ENCODE measurements at regions of chr16 and their contacts with region 1.

Region 1: DNA sequence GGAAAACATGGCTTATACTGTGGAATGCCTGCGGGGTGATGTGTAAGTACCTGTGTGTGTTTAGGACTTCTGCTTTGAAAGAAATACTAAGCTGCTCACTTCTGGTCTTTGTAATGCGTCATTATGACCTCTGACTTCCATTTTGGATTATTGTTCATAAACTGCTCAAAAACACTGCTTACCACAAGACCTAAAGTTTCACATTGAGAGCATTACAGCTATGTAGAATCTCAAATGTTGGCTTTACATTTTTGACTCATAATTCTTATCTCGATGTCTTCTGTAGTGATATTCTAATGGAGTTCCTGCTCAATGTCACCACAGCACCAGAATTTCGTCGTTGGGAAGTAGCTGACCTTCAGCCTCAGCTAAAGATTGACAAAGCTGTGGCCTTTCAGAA is 9.3 kb downstream of the UQCRC2 start:
- DNase-seq: no peak
- ATAC-seq: no peak
- H3K4me3 ChIP-seq: no peak overlapping the region
- H3K4me3 Mint-ChIP-seq: no peak overlapping the region
- H3K27ac ChIP-seq: no peak overlapping the region
- H3K27ac Mint-ChIP-seq: no peak overlapping the region
- H3K4me1 ChIP-seq: peaks cover 4% of the 10 kb centered on the region
- H3K4me1 Mint-ChIP-seq: peaks cover 20% of the 10 kb centered on the region
- H3K27me3 ChIP-seq: no peaks in the 10 kb centered on the region
- H3K27me3 Mint-ChIP-seq: no peaks in the 10 kb centered on the region
- CTCF ChIP-seq: no peak

Region 2: DNA sequence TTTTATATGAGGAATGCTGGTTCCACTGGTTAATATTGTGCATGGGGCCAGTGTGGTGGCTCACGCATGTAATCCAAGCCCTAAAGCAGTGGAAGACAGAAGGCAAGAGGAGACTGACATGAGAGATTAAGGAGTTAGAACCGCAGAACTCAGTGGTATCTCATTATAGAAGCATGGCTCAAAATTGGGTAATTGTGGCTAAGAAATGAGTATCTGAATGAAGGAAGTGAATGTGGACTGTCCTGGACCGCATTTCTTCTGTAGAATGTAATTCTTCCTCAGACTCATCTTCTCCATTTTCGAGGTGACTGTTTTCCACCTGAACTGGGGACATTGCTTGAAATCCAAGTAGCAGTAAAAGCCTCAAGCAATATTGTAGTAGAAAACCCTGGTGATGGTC is 454.5 kb after region 1 on chr16:
- CTCF ChIA-PET with region 1: no interaction called
- POLR2A ChIA-PET with region 1: no interaction called
- intact Hi-C with region 1: loop called in 1 of 2 experiments (anchors 5 kb)
- DNase-seq: no peak
- ATAC-seq: no peak
- H3K4me3 ChIP-seq: no peak overlapping the region
- H3K4me3 Mint-ChIP-seq: no peak overlapping the region
- H3K27ac ChIP-seq: no peak overlapping the region
- H3K27ac Mint-ChIP-seq: peak overlapping the region; percentile 44
- H3K4me1 ChIP-seq: no peaks in the 10 kb centered on the region
- H3K4me1 Mint-ChIP-seq: no peaks in the 10 kb centered on the region
- H3K27me3 ChIP-seq: no peaks in the 10 kb centered on the region
- H3K27me3 Mint-ChIP-seq: no peaks in the 10 kb centered on the region
- CTCF ChIP-seq: no peak